ENCODE measurements at regions of chr6 and their contacts with region 1.

Region 1: DNA sequence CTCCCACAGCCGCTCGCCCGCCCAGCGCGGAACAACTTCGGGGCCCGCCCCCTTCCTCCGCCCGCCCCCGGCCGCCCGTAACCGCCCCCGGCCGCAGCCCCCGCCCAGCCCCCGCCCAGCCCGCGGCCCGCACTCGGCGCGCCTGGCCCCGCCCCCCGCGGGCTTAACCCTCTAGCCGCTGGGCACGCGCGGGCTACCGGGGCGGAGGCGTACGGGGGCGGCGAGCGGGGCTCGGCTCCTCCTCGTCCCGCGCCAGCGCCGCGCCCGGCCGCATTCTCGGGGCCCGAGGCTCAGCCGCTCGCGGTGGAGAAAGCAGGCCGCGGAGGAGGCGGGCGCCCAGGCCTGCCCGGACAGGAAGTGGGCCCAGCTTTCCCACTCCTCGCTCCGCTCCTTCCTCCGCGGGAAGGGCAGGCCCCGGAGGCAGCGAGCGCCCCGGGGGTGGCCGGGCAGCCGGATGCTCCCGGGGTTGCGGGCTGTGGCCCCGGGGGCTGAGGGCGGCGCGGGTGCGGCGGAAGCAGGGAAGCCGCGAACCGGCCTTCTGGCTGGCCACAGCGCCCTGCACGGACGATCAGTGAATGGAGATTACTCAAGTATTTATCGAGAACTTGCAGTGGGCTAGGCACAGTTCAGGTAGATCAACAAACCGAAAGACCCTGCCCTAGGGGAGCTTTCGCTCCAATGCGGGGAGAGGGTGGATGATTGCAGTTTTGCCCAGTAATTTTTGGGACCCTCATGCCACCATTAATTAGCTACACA is at the start of gene TRAM2:
- DNase-seq: no peak
- H3K4me3 ChIP-seq: peak within 1 kb of the TSS; percentile 74 to 77
- H3K27ac ChIP-seq: peak within 1 kb of the TSS; percentile 89
- H3K4me1 ChIP-seq: peaks cover 42% of the 10 kb centered on the region
- H3K27me3 ChIP-seq: no peaks in the 10 kb centered on the region
- CTCF ChIP-seq: peak in 1 of 3 experiments; percentile 8
- POLR2A ChIP-seq: peak in 1 of 2 donors; percentile 26
- total RNA-seq, gene TRAM2: 11.0 TPM

Region 2: GRCh38 chr6:51891784-51892183 is 685.4 kb before region 1 on chr6:
- intact Hi-C with region 1: no loop called
- DNase-seq: no peak
- H3K4me3 ChIP-seq: no peak overlapping the region
- H3K27ac ChIP-seq: no peak overlapping the region
- H3K4me1 ChIP-seq: no peaks in the 10 kb centered on the region
- H3K27me3 ChIP-seq: no peaks in the 10 kb centered on the region
- CTCF ChIP-seq: no peak
- POLR2A ChIP-seq: no peak

Region 3: DNA sequence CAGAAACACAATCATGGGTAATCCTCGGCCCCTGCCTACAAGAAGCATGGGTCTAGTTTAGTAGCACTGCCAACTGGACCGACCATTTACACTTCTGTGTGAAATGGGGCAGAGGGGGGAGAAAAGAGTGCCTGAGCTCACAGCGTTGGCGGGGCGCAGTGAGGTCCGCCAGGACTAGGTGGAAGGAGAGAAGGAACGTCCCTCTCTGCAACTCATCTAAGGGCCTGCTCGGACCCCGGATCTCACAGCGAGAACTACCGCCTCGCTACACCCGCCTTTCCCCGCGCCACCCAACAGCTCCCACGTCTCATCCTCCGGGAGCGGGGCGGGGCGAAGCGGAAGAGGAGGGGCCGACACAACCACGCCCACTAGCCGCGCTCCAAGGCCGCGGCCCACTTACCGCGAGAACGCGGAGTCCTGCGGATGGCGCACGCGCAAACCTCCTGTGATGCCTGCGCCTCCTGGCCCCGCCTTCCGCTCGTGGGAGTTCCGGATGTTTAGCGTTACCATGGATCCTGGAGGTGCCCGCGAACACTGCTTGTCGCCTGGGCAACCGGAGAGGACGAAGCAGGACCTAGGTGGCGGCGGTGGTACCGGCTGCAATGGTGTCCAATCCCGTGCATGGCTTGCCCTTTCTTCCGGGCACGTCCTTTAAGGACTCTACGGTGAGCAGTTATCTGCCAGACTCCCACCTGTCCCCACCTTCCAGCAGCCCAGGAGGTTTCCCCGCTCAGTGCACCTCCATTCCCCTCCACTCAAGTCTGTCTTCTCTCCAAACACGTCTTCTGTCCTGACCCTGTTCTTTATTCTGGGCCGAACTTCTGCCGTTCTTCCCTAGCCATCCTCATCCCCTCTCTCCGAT is 157.2 kb before region 1 on chr6 and contains the start of gene EFHC1:
- intact Hi-C with region 1: loop called (anchors 2 kb)
- DNase-seq: peak in 1 of 2 donors; percentile 97
- H3K4me3 ChIP-seq: peak within 1 kb of the TSS; percentile 81 to 84
- H3K27ac ChIP-seq: peak within 1 kb of the TSS; percentile 86
- H3K4me1 ChIP-seq: peaks cover 29% of the 10 kb centered on the region
- H3K27me3 ChIP-seq: no peaks in the 10 kb centered on the region
- CTCF ChIP-seq: no peak
- POLR2A ChIP-seq: peak in 1 of 2 donors; percentile 74
- total RNA-seq, gene EFHC1: 27.0 TPM

Region 4: DNA sequence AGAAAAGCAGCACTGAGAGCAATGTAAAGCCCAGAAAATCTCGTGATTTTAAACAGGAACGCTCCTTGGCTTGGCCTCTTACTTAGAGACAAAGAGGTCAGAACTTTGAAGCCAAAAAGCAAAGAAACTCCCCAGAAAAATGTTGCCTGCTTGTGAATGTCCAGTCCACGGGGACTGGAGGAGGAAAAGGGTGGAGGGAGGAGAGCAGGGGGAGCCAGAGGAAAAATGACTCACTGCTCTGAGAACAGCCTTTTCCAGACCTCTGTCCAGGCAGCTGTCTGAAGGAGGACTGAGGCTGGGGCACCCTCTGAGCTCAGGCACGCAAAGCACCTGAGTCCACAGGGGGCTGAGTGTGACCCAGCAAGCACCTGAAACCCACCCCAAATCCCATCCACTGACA is 65.0 kb before region 1 on chr6:
- intact Hi-C with region 1: loop called (anchors 5 kb)
- DNase-seq: peak in 1 of 2 donors; percentile 94
- H3K4me3 ChIP-seq: no peak overlapping the region
- H3K27ac ChIP-seq: peak overlapping the region; percentile 91
- H3K4me1 ChIP-seq: peaks cover 67% of the 10 kb centered on the region
- H3K27me3 ChIP-seq: no peaks in the 10 kb centered on the region
- CTCF ChIP-seq: no peak
- POLR2A ChIP-seq: no peak

Region 5: GRCh38 chr6:52598123-52598823 is 21.1 kb after region 1 on chr6:
- intact Hi-C with region 1: loop called (anchors 2 kb)
- DNase-seq: peak in 1 of 2 donors; percentile 46
- H3K4me3 ChIP-seq: no peak overlapping the region
- H3K27ac ChIP-seq: peak overlapping the region; percentile 12
- H3K4me1 ChIP-seq: peaks cover 31% of the 10 kb centered on the region
- H3K27me3 ChIP-seq: no peaks in the 10 kb centered on the region
- CTCF ChIP-seq: peak; percentile 33 to 59 (median 58)
- POLR2A ChIP-seq: no peak

Measured in vagina (tissue), 2 donors.